ENCODE measurements at regions of chr7 and their contacts with region 1.

Region 1: GRCh38 chr7:90346336-90347125 is at the start of gene GTPBP10:
- DNase-seq: peak; percentile 97
- H3K4me3 ChIP-seq: peak within 1 kb of the TSS; percentile 73
- H3K27ac ChIP-seq: peak within 1 kb of the TSS; percentile 88
- H3K4me1 ChIP-seq: peaks cover 10% of the 10 kb centered on the region
- H3K27me3 ChIP-seq: no peaks in the 10 kb centered on the region
- CTCF ChIP-seq: peak; percentile 86
- total RNA-seq, gene GTPBP10: 32.9 and 34.7 TPM in 2 replicates

Region 2: DNA sequence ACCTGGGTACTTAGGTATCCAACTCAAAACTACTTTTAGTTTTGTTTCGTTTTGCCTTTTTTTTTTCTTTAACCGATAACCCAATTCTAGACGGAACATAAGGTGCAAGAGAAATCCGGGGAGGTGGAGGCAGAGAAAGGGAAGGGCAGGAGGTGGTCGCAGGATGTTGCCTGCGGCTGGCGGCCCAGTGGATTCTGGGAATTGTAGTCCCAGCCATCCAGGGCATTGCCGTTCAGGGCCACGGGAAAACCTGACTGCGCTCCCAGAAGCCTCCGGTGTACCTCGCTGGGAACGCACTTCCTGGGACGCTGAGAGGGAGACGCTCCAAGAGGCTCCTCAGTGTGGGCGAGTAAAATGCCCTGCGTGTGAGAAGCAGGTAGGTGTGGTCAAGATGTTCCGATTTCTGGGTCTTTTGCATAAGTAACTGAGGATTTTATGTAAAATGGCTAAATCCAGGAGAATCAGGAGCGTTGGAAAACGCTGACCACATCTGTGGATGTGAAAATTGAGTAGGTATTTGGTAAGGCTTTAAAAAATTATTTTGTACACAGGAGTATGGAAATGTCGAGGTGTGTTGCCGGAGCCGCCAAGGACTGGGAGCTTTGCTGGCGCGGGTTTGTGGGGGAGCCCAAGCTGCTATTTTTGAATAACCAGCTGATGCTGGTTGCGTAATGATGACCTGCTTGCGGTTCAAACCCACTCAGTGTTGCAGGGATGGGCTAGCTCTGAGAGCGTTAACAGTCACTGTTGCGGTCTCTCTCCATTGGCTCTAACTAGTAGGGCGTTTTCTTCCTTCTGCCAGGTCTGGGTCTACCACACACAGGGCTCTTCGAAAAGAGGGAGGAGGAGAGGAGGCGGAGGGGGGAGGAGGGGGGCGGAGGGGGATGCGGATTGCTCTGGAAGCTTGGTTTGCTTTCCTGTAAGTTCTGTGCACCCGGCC is 56.9 kb after region 1 on chr7 and contains the start of gene CLDN12:
- CTCF ChIA-PET with region 1: no interaction called
- POLR2A ChIA-PET with region 1: no interaction called
- intact Hi-C with region 1: loop called (anchors 2 kb)
- DNase-seq: peak; percentile 95
- H3K4me3 ChIP-seq: peak within 1 kb of the TSS; percentile 74
- H3K27ac ChIP-seq: peak within 1 kb of the TSS; percentile 68
- H3K4me1 ChIP-seq: peaks cover 37% of the 10 kb centered on the region
- H3K27me3 ChIP-seq: no peaks in the 10 kb centered on the region
- CTCF ChIP-seq: no peak
- total RNA-seq, gene CLDN12: 32.9 and 35.1 TPM in 2 replicates

Region 3: DNA sequence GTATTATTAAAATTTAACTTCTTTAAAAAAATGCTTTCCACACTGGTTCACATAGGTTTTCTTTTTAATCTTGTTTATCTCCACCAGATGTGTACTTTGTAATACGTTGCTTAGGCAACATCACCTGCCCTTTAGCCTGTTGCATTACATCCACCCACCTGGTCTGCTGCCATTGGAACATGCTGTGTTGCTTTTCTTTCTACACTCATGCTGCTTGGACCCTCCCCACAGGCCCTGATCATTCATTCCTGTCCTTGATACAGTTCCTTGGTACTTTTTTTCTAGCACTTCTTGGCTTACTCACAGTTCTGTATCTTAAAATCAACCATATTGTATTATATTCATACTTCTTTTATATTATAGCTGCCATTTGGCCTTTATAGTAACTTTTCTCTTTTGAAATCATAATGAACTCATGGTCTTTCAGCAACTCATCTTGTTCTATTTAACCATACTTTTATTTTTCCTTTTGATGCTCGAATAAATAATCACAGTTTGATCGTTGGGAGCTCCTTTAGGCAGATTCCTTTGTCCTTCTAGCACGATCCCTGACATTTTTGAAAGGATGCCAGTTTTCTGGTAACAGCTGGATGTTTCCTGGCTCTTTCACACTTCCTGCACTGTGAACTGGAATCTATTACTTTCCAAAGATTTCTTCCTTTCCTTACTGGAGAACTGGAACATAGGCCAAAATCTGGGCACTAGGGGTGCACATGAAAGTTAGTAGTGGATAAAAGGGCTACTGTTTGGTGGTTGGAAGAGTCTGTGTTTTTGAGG is 374.6 kb after region 1 on chr7:
- CTCF ChIA-PET with region 1: no interaction called
- POLR2A ChIA-PET with region 1: no interaction called
- intact Hi-C with region 1: no loop called
- DNase-seq: peak; percentile 91
- H3K4me3 ChIP-seq: peak overlapping the region; percentile 5
- H3K27ac ChIP-seq: peak overlapping the region; percentile 82
- H3K4me1 ChIP-seq: peaks cover 84% of the 10 kb centered on the region
- H3K27me3 ChIP-seq: no peaks in the 10 kb centered on the region
- CTCF ChIP-seq: 0 out of 2 replicates have a peak, but pooled peaks have one; percentile 6

Measured in A673 (cell line).